ENCODE measurements at regions of chr3 and their contacts with region 1.

Region 1: DNA sequence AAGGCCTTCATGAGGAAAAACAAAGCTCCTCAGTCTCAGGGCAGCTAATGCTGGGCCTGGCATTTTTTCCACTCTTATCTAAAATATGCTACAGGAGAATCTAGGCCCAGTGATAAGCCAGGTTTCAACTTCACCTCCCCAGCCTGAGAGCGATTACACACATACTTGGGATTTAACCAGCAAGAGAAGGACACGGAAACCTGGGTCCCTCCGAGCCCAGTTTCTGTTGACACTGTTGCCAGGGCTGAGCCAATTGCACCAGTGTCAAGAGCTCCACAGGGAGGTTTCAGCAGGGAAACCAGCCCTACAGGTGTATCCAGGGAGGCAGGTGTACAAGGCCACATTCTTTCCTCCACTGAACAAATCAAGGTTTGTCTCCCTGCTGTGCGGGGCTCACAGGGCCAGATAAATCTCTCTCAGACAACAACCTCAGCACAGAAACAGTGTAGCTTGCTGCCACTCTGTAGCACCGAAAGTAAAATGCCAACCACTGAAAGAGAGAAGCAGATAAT is 85.4 kb downstream of the MAGI1 start:
- DNase-seq: no peak
- H3K4me3 ChIP-seq: no peak overlapping the region
- H3K27ac ChIP-seq: peak overlapping the region; percentile 97
- H3K4me1 ChIP-seq: peaks cover 59% of the 10 kb centered on the region
- H3K27me3 ChIP-seq: no peaks in the 10 kb centered on the region
- CTCF ChIP-seq: no peak

Region 2: GRCh38 chr3:65785065-65785645 is 168.2 kb before region 1 on chr3:
- CTCF ChIA-PET with region 1: no interaction called
- POLR2A ChIA-PET with region 1: no interaction called
- intact Hi-C with region 1: loop called (anchors 2 kb)
- DNase-seq: peak; percentile 75
- H3K4me3 ChIP-seq: no peak overlapping the region
- H3K27ac ChIP-seq: peak overlapping the region; percentile 57
- H3K4me1 ChIP-seq: peaks cover 39% of the 10 kb centered on the region
- H3K27me3 ChIP-seq: no peaks in the 10 kb centered on the region
- CTCF ChIP-seq: peak; percentile 60

Region 3: DNA sequence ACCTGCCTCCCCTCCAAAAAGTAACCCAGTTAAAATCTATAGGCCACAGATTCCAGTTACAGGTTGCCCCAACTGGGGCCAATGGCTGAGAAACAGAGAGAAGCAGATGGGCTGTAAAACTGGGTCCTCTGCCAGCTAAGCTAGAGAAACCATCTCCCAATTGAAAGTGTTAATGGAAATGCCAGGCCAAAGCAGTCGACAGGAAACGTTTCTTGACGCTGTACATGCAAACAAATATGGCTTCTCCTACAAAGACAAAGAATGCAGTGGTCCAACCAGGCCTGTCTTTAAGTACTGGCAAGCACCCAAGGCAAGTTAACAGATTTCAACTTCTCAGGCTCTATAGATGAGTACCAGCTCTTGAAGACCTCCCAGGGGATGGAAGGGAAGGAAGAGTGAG is 14.1 kb after region 1 on chr3:
- CTCF ChIA-PET with region 1: no interaction called
- POLR2A ChIA-PET with region 1: no interaction called
- intact Hi-C with region 1: loop called (anchors 1 kb)
- DNase-seq: peak; percentile 53
- H3K4me3 ChIP-seq: no peak overlapping the region
- H3K27ac ChIP-seq: peak overlapping the region; percentile 55
- H3K4me1 ChIP-seq: peaks cover 62% of the 10 kb centered on the region
- H3K27me3 ChIP-seq: no peaks in the 10 kb centered on the region
- CTCF ChIP-seq: no peak

Region 4: GRCh38 chr3:66083784-66084213 is 130.4 kb after region 1 on chr3:
- CTCF ChIA-PET with region 1: no interaction called
- POLR2A ChIA-PET with region 1: no interaction called
- intact Hi-C with region 1: no loop called
- DNase-seq: no peak
- H3K4me3 ChIP-seq: no peak overlapping the region
- H3K27ac ChIP-seq: no peak overlapping the region
- H3K4me1 ChIP-seq: no peaks in the 10 kb centered on the region
- H3K27me3 ChIP-seq: no peaks in the 10 kb centered on the region
- CTCF ChIP-seq: no peak

Region 5: DNA sequence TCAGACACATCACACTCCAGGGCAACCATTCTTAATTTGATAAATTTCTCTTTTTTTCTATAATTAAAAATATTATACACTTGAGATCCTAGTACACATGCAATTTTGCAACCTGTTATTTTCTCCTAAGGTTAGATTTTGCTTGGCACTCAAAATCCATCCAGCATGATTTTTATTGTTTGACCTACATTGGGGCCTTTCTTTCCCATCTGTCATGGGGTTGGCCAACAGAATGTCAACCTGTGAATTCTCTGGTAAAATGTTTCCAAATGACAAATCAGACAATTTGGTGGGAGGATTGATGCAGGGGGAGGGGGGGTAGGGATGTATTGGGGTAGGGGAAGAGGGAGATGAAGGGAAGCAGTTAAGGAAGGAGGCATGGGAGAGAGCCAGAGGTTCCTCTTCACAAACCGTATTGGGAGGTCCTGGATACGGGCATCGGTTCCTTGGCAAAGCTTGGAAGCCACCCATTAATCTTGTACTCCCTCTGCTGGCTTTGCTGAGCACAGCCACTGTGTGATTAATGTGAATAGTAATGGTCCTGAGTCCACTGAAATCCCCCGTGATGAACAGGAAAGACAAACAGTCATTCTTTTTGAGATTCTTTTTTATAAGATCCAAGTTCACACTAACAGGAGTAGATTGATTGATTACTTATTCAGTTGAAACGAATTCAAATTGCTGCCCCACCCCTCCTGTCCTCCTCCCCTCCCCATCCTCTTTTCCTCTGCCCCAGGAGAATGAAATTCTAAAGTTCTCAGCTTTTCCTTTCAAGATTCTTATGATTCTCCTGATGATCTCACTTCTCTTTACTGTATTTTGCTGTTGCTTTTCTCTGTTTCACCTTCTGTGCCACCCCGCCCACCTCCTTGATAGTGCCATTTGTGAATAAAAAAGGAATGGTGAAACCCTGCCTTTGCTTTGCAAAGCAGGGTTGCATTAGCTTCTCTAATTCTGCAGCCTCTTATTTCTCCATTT is 185.3 kb after region 1 on chr3:
- CTCF ChIA-PET with region 1: no interaction called
- POLR2A ChIA-PET with region 1: no interaction called
- intact Hi-C with region 1: loop called (anchors 2 kb)
- DNase-seq: peak; percentile 78
- H3K4me3 ChIP-seq: no peak overlapping the region
- H3K27ac ChIP-seq: no peak overlapping the region
- H3K4me1 ChIP-seq: peaks cover 7% of the 10 kb centered on the region
- H3K27me3 ChIP-seq: no peaks in the 10 kb centered on the region
- CTCF ChIP-seq: peak; percentile 65

Region 6: GRCh38 chr3:66537735-66538134 is 584.4 kb after region 1 on chr3:
- CTCF ChIA-PET with region 1: no interaction called
- POLR2A ChIA-PET with region 1: no interaction called
- intact Hi-C with region 1: loop called (anchors 5 kb)
- DNase-seq: no peak
- H3K4me3 ChIP-seq: no peak overlapping the region
- H3K27ac ChIP-seq: peak overlapping the region; percentile 87
- H3K4me1 ChIP-seq: peaks cover 29% of the 10 kb centered on the region
- H3K27me3 ChIP-seq: no peaks in the 10 kb centered on the region
- CTCF ChIP-seq: no peak